ENCODE measurements at regions of chr7 and their contacts with region 1.

Region 1: DNA sequence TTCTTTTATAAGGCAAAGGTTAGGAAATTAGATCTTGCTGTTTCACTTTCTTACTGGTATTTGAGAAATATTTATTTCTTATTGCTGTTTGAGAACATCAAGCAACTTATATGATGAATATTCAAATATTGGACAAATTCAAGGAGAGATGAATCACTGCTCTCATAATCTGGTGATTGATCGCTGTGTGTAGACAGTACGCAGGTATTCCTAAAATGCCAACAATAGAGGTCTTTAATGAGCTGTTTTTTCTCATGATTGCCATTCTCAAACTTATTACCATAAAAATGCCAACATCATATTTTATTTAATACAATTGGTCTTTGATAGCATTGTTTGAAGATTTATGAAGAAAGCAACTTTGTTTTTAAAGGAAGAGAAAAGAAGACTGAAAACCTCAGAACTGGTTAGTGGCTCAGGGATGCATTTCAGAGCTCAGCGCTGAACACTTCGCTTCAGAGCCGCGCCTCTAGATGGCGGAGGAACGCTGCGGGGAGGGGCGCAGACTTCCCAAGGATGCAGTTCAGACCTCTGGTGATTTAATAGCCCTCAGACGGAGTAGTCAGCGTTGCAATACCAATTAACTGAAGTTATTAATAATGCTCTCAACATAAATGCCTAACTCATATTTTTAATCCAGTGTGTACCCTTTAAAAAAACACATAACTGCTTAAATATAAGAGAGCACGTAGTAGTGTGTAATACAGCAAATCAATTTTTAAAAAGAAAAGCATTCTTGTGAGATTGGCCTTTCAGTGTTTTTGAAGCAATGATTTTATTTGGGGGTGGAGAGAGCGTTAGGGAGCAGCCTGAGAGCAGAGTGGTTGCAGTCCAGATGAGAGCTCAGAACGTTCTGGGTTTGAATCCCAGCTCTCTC is 38.5 kb upstream of the STEAP4 start:
- DNase-seq: peak; percentile 30 to 53
- ATAC-seq: peak in 7 of 8 donors; percentile 76 to 93 (median 85)
- H3K4me3 ChIP-seq: no peak overlapping the region
- H3K27ac ChIP-seq: no peak overlapping the region
- H3K4me1 ChIP-seq: peaks cover 0 to 8% (median 0%) of the 10 kb centered on the region in 9 donors
- H3K27me3 ChIP-seq: peaks cover 0 to 7% (median 0%) of the 10 kb centered on the region in 7 donors
- CTCF ChIP-seq: peak; percentile 15 to 73 (median 60)

Region 2: DNA sequence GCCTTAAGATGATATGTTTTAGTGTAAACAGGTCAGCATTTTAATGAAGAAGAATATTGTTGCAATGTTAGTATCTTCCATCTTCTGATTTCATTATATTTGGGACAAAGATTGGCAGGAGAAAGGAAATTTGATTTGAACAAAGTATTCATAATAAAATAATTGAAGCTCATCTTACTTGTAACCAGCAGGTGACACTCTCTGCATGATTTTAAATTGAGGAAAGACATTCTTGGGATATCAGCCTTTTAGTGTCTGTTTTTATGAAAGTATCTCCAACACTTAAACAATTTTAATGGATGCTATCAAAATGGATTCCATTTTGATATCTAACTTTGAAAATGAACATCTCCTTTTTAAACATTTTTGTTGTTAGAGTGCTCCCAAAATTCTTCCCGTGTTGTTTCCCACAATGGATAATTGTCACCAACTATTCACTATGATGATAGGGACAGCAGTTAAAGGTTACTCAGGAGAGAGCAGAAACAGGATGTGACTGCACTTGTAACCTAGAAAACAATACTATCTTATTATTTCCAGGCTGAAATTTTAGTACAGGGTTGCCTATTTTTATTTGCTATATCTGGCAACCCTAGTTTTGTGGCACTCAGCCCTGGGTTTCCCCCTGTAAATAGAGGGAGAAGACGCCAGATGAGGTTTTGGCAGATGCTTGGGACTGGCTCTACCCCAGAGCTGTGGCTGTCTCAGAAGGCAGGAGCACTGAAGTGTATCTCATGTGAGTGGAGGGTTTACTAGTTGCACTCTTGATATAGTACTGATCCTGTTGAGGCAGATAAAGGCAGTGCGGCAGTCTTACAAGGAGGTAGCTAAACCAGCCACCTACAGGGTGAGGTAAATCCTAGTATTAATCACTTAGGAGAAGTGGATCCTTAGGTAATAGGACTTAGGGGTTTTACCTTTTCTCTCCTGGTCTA is 838.7 kb before region 1 on chr7:
- intact Hi-C with region 1: no loop called
- DNase-seq: no peak
- ATAC-seq: peak in 1 of 8 donors; percentile 22
- H3K4me3 ChIP-seq: no peak overlapping the region
- H3K27ac ChIP-seq: no peak overlapping the region
- H3K4me1 ChIP-seq: peaks cover 0 to 9% (median 0%) of the 10 kb centered on the region in 9 donors
- H3K27me3 ChIP-seq: no peaks in the 10 kb centered on the region
- CTCF ChIP-seq: peak in 8 of 9 donors; percentile 23 to 67 (median 52)

Region 3: DNA sequence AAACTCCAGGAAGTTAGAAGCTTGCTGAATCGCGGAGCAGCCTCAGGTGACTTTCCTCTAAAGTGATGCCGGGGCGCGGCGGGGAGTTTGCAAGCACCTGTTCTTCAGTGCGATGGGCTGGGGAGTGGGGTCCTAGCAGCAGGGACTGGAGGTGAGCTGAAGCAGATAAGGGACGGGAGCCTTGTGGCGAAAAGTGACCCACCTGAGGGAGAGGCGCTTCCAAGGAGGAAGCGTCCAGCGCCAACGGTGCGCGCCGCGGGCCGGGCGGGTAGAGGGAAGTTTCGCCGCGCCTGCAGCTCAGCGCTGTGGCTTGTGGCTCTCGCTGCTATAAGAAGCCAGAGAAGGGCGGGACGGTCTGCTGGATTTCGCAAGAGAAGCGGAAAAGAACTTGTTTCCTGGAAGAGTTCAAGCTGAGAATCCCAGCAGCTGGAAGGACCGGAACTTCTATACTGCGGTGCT is 38.6 kb before region 1 on chr7 and contains the start of gene STEAP4:
- intact Hi-C with region 1: loop called in 1 of 10 experiments (anchors 5 kb)
- DNase-seq: peak; percentile 78 to 79
- ATAC-seq: peak; percentile 81 to 93 (median 86)
- H3K4me3 ChIP-seq: peak within 1 kb of the TSS in 9 of 10 donors; percentile 40 to 65 (median 54)
- H3K27ac ChIP-seq: peak within 1 kb of the TSS; percentile 43 to 82 (median 66)
- H3K4me1 ChIP-seq: peaks cover 0 to 68% (median 36%) of the 10 kb centered on the region in 9 donors
- H3K27me3 ChIP-seq: peaks cover 0 to 7% (median 0%) of the 10 kb centered on the region in 7 donors
- CTCF ChIP-seq: no peak
- total RNA-seq, gene STEAP4: 5.1 to 64.9 (median 12.5) TPM

Measured in heart right ventricle (tissue), 16 donors.